HepG2 (cell line): ENCODE measurements at regions of chr4 and their contacts with region 1.

Region 1: DNA sequence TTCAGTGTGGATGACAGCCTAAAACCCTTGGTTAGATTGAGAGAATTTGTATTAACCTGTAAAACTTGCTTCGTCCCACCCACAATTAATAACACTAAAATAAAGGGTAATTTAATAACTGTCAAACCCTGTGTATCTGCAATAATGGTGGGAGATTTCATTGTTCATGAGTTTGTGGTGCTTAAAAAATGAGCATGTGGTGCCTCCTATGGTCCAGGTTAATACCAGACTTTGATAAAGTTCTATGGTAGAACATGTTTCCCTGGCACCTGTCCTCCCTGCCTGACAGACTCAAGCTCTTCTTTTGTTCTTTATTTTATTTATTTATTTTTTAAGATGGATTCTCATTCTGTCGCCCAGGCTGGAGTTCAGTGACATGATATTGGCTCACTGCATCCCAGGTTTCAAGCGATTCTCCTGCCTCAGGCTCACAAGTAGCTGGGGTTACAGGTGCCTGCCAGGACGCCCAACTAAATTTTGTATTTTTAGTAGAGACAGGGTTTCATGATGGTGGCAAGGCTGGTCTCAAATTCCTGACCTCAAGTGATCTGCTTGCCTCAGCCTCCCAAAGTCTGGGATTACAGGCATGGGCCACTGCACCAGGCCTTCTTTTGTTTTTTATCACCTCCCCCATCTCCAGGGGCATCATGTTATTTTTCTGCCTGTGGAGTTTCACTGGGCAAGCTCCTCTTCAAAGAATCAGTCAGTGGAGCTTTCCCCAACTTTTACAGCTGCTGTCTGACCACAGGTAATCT is 289.2 kb downstream of the NR3C2 start:
- DNase-seq: no peak
- ATAC-seq: no peak
- H3K4me3 ChIP-seq: no peak overlapping the region
- H3K27ac ChIP-seq: no peak overlapping the region
- H3K4me1 ChIP-seq: no peaks in the 10 kb centered on the region
- H3K27me3 ChIP-seq: no peaks in the 10 kb centered on the region
- CTCF ChIP-seq: no peak
- EP300 ChIP-seq: no peak
- POLR2A ChIP-seq: no peak
- RAD21 ChIP-seq: no peak

Region 2: DNA sequence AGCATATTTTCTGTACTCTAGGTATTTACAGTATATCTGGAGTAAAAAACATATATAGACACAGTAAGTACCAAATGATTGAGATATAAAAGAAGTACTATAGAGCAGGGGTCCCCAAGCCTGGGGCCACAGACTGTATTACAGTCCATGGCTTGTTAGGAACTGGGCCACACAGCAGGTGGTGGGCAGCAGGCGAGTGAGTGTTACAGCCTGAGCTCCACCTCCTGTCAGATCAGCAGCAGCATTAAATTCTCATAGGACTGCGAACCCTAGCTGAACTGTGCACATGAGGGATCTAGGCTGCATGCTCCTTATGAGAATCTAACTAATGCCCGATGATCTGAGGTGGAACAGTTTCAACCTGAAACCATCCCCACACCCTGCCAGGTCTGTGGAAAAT is 11.5 kb before region 1 on chr4:
- CTCF ChIA-PET with region 1: no interaction called
- POLR2A ChIA-PET with region 1: no interaction called
- in situ Hi-C with region 1: no loop called
- intact Hi-C with region 1: loop called (anchors 1 kb)
- DNase-seq: no peak
- ATAC-seq: no peak
- H3K4me3 ChIP-seq: no peak overlapping the region
- H3K27ac ChIP-seq: no peak overlapping the region
- H3K4me1 ChIP-seq: no peaks in the 10 kb centered on the region
- H3K27me3 ChIP-seq: no peaks in the 10 kb centered on the region; a peak in 1 of 5 replicates
- CTCF ChIP-seq: no peak
- EP300 ChIP-seq: no peak
- POLR2A ChIP-seq: no peak
- RAD21 ChIP-seq: no peak